ENCODE measurements at regions of chr10 and their contacts with region 1.

Region 1: GRCh38 chr10:124000792-124001201 is 92.6 kb downstream of the CHST15 start:
- DNase-seq: no peak
- ATAC-seq: no peak

Region 2: DNA sequence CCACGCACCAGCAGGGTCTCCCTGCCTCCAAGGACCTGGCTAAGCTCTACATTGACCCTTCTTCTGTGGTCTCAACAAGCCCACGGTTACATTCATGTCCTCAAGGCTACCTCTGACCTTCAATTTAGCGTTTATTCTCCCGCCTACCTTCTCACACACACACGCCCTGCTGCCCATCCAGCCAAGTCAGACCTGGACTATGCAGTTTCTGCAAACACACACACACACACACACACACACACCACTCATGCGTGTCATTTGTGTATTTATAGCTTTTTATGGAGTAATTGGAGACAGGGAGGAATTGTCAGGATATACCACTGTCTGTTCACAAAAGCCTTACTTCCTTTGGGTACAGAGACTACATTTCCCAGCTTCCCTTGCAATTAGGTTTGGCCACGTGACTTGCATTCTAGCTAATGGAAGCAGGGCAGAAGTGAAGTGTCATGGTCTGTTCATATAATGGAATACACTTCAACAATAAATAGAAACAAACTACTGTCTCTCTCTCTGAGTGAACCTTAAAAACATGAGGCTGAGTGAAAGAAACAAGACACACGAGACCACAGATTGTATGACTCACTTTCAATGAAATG is 55.4 kb before region 1 on chr10:
- intact Hi-C with region 1: no loop called
- DNase-seq: no peak
- ATAC-seq: peak; percentile 56

Region 3: GRCh38 chr10:124092860-124093773 is 92.3 kb after region 1 on chr10 and contains the start of gene CHST15:
- intact Hi-C with region 1: loop called in 1 of 2 experiments (anchors 10 kb)
- DNase-seq: peak in 1 of 2 donors; percentile 42
- ATAC-seq: peak; percentile 48
- total RNA-seq, gene CHST15: 2.7 to 11.6 TPM

Region 4: DNA sequence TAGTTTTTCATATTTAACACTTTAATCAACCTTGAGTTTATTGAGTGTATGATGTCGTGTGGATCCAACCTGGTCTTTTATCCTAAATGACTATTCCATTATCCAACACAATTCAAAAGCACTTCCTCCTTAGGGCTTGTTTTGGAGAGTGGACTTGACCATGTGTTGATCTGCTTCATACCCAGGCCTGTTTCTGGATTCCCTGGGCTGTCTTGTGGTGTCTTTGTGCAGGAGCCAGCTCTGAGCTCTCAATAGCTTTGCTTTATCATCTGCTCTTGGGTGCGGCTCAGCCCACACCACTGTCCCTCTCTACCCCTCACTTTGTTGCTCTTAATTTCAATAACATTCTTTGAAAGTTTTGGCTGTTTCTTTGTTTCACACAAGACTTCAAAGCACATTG is 163.5 kb after region 1 on chr10:
- intact Hi-C with region 1: no loop called
- DNase-seq: no peak
- ATAC-seq: no peak

Region 5: GRCh38 chr10:124259139-124259825 is 258.5 kb after region 1 on chr10:
- intact Hi-C with region 1: loop called in 1 of 2 experiments (anchors 10 kb)
- DNase-seq: peak in 1 of 2 donors; percentile 25
- ATAC-seq: no peak